Panc1 (cell line): ENCODE measurements at regions of chr22 and their contacts with region 1.

Region 1: GRCh38 chr22:43257549-43257948 is 70.6 kb upstream of the TTLL12 start:
- DNase-seq: no peak
- ATAC-seq: no peak
- H3K4me3 ChIP-seq: no peak overlapping the region
- H3K27ac ChIP-seq: no peak overlapping the region
- H3K4me1 ChIP-seq: no peaks in the 10 kb centered on the region
- H3K27me3 ChIP-seq: no peaks in the 10 kb centered on the region
- CTCF ChIP-seq: no peak

Region 2: GRCh38 chr22:42919199-42919598 is 338.4 kb before region 1 on chr22:
- CTCF ChIA-PET with region 1: no interaction called
- POLR2A ChIA-PET with region 1: no interaction called
- in situ Hi-C with region 1: no loop called
- intact Hi-C with region 1: no loop called
- DNase-seq: no peak
- ATAC-seq: no peak
- H3K4me3 ChIP-seq: no peak overlapping the region
- H3K27ac ChIP-seq: no peak overlapping the region
- H3K4me1 ChIP-seq: peaks cover 12% of the 10 kb centered on the region
- H3K27me3 ChIP-seq: no peaks in the 10 kb centered on the region
- CTCF ChIP-seq: no peak

Region 3: DNA sequence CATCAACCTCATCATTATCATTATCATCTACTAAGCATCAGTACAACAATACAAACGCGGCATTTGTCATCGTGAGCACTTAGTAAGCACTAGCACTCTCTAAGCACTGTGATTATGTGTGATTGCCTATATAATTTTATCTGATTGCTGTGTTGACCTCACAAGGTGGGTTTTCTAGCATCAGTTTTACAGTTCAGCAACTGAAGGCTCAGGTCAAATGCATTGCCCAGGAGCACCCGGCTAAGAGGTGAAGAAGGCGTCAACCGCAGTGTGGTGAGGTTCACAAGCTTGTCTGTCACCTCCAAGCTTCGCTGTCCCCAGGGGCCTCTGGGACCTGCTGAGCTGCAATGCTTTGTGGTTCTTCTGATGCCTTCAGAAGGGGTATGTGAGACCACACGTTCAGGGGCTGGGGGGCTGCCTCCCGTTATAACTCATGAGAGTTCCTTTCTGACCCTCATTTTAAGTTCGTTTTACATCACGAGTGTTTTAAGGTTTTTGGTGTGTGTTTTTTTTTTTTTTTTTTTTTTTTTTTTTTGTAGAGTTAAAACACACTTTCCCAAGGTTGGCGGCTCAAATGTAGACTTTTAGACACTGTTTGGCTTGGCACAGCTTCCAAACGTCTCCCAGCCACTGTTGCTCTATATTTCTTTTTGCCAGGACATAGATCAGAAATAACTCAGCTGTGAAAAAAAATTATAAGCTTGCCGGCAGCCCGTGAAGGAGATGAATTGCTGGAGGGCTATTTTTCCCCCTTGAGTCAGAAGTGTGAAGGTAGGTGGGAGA is 119.4 kb after region 1 on chr22:
- CTCF ChIA-PET with region 1: interaction called, 16 read pairs
- POLR2A ChIA-PET with region 1: no interaction called
- in situ Hi-C with region 1: no loop called
- intact Hi-C with region 1: no loop called
- DNase-seq: no peak
- ATAC-seq: no peak
- H3K4me3 ChIP-seq: no peak overlapping the region
- H3K27ac ChIP-seq: no peak overlapping the region
- H3K4me1 ChIP-seq: no peaks in the 10 kb centered on the region
- H3K27me3 ChIP-seq: 0 out of 2 replicates have a peak, but pooled peaks cover 2% of the 10 kb centered on the region
- CTCF ChIP-seq: no peak